CD4-positive, alpha-beta memory T cell (primary cell): ENCODE measurements at regions of chr2 and their contacts with region 1.

Region 1: GRCh38 chr2:37414470-37414949 is 70.1 kb downstream of the QPCT start:
- DNase-seq: peak in 4 of 5 donors; percentile 53 to 57 (median 57)
- H3K4me3 ChIP-seq: no peak overlapping the region
- H3K4me3 Mint-ChIP-seq: peak overlapping the region in 1 of 8 donors; percentile 27
- H3K27ac ChIP-seq: no peak overlapping the region
- H3K27ac Mint-ChIP-seq: no peak overlapping the region
- H3K4me1 ChIP-seq: peaks cover 7% of the 10 kb centered on the region
- H3K4me1 Mint-ChIP-seq: peaks cover 6 to 19% (median 13%) of the 10 kb centered on the region in 4 donors
- H3K27me3 ChIP-seq: no peaks in the 10 kb centered on the region
- H3K27me3 Mint-ChIP-seq: peaks cover 2 to 4% of the 10 kb centered on the region in 2 donors

Region 2: DNA sequence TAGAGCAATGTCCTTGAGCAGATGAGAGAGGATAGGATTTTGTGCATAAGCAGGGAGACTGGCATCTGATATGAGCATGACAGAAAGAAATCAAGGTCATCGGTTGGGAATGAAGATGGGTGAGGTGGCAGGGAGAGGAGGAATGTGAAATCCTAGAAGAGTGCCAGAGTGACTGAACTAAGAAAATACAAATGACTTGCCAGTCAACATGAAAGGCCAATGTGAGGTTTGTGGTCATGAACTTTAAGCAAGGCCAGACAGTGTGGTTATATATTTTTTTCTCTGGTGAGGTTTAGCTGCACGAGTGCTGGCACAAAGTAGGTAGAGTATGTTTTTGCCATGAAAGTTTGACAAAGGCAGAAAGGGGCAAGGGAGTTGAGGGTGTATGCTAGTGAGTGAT is 48.8 kb before region 1 on chr2:
- CTCF ChIA-PET with region 1: no interaction called
- POLR2A ChIA-PET with region 1: no interaction called
- intact Hi-C with region 1: no loop called
- DNase-seq: no peak
- H3K4me3 ChIP-seq: no peak overlapping the region
- H3K4me3 Mint-ChIP-seq: no peak overlapping the region
- H3K27ac ChIP-seq: no peak overlapping the region
- H3K27ac Mint-ChIP-seq: no peak overlapping the region
- H3K4me1 ChIP-seq: peaks cover 33% of the 10 kb centered on the region
- H3K4me1 Mint-ChIP-seq: peaks cover 0 to 16% (median 8%) of the 10 kb centered on the region in 4 donors
- H3K27me3 ChIP-seq: no peaks in the 10 kb centered on the region
- H3K27me3 Mint-ChIP-seq: peaks cover 11 to 19% of the 10 kb centered on the region in 2 donors

Region 3: GRCh38 chr2:37389989-37390765 is 24.3 kb before region 1 on chr2:
- CTCF ChIA-PET with region 1: interaction called, 99 read pairs
- POLR2A ChIA-PET with region 1: no interaction called
- intact Hi-C with region 1: no loop called
- DNase-seq: peak; percentile 61 to 90 (median 66)
- H3K4me3 ChIP-seq: peak overlapping the region in 1 of 2 donors; percentile 4
- H3K4me3 Mint-ChIP-seq: peak overlapping the region; percentile 28 to 78 (median 57)
- H3K27ac ChIP-seq: peak overlapping the region; percentile 38
- H3K27ac Mint-ChIP-seq: peak overlapping the region in 4 of 7 donors; percentile 62 to 94 (median 88)
- H3K4me1 ChIP-seq: peaks cover 29% of the 10 kb centered on the region
- H3K4me1 Mint-ChIP-seq: peaks cover 2 to 7% (median 3%) of the 10 kb centered on the region in 4 donors
- H3K27me3 ChIP-seq: no peaks in the 10 kb centered on the region
- H3K27me3 Mint-ChIP-seq: no peaks in the 10 kb centered on the region

Region 4: DNA sequence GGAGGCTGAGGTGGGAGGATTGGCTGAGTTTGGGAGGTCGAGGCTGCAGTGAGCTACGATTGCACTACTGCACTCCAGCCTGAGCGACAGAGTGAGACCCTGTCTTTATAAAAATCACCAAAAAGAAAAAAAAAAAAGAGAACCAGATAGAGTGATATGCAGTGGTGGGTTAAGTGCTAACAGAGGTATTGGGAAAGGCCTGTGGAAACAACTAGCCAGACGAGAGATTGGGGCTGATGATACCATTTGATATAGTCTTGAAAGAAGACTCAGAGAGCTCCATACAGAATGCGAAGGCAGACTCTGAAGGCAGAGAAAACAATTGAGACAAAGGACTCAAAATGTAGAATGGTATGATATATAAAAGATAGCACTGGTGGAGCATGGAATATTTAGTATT is 122.8 kb after region 1 on chr2:
- CTCF ChIA-PET with region 1: interaction called, 53 read pairs
- POLR2A ChIA-PET with region 1: no interaction called
- intact Hi-C with region 1: loop called (anchors 1 kb)
- DNase-seq: no peak
- H3K4me3 ChIP-seq: no peak overlapping the region
- H3K4me3 Mint-ChIP-seq: no peak overlapping the region
- H3K27ac ChIP-seq: no peak overlapping the region
- H3K27ac Mint-ChIP-seq: no peak overlapping the region
- H3K4me1 ChIP-seq: no peaks in the 10 kb centered on the region
- H3K4me1 Mint-ChIP-seq: peaks cover 0 to 5% (median under 1%) of the 10 kb centered on the region in 4 donors
- H3K27me3 ChIP-seq: no peaks in the 10 kb centered on the region
- H3K27me3 Mint-ChIP-seq: peaks cover 0 to 1% of the 10 kb centered on the region in 2 donors

Region 5: DNA sequence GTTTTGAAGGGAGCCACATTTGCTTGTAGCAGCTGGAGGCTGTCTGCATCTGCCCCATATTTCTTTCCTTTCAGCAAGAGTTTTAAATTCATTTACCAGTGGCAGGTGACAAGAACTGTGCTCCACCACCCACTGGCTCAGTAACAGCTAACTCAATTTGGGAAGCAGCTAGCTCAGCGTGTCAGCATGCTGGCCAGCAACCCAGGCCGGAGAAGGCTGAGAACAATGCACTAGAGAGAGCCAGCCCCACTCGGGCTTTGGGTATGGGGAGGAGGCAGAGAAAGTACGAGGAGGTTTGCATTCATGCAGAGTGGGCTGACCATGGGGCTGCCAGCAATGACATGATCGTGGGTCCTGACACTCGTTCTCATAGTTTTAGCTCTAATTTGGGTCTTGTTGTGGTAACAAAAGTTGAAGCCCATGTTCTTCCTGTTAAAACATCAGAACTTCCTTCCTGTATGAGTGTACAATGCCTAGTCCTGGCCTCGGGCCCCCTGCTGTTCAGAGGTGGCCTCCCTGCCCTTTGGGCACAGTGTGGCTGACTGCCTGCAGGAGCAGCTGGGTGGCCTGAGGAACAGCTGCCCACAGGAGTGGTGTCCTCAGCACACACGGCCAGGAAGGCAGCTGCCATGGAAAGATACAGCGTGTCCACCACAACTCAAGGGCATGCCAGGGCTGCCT is 234.0 kb after region 1 on chr2:
- CTCF ChIA-PET with region 1: interaction called, 26 read pairs
- POLR2A ChIA-PET with region 1: interaction called, 4 read pairs
- intact Hi-C with region 1: loop called (anchors 1 kb)
- DNase-seq: peak; percentile 42 to 76 (median 50)
- H3K4me3 ChIP-seq: peak overlapping the region in 1 of 2 donors; percentile 50
- H3K4me3 Mint-ChIP-seq: peak overlapping the region in 7 of 8 donors; percentile 66 to 91 (median 80)
- H3K27ac ChIP-seq: peak overlapping the region; percentile 56
- H3K27ac Mint-ChIP-seq: peak overlapping the region; percentile 85 to 98 (median 92)
- H3K4me1 ChIP-seq: peaks cover 97% of the 10 kb centered on the region
- H3K4me1 Mint-ChIP-seq: peaks cover 76 to 96% (median 88%) of the 10 kb centered on the region in 4 donors
- H3K27me3 ChIP-seq: no peaks in the 10 kb centered on the region
- H3K27me3 Mint-ChIP-seq: no peaks in the 10 kb centered on the region

Region 6: DNA sequence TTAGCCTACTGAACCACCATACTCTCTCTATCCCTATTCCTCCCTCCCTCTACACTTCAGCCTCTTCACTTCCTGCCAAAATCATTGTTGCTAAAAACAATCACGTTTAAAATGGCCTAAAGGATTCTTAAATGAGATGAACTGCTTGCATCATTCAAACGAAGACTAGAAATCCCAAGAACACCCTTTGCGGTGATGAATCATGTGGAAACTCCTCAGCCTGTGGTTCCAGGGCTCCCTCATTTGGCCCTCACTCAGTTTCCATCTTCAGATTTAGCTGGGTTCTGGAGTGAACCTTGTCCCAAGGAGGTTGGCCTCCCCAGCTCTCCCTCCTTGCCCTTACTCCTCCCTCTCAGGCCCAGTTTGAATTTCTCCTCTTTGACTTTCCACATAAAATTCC is 382.6 kb after region 1 on chr2:
- CTCF ChIA-PET with region 1: interaction called, 4 read pairs
- POLR2A ChIA-PET with region 1: no interaction called
- intact Hi-C with region 1: loop called (anchors 1 kb)
- DNase-seq: no peak
- H3K4me3 ChIP-seq: no peak overlapping the region
- H3K4me3 Mint-ChIP-seq: no peak overlapping the region
- H3K27ac ChIP-seq: no peak overlapping the region
- H3K27ac Mint-ChIP-seq: peak overlapping the region in 1 of 7 donors; percentile 13
- H3K4me1 ChIP-seq: no peaks in the 10 kb centered on the region
- H3K4me1 Mint-ChIP-seq: peaks cover 0 to 2% (median 0%) of the 10 kb centered on the region in 4 donors
- H3K27me3 ChIP-seq: no peaks in the 10 kb centered on the region
- H3K27me3 Mint-ChIP-seq: no peaks in the 10 kb centered on the region

Region 7: GRCh38 chr2:37877457-37878315 is 463.2 kb after region 1 on chr2:
- CTCF ChIA-PET with region 1: interaction called, 162 read pairs
- POLR2A ChIA-PET with region 1: interaction called, 4 read pairs
- intact Hi-C with region 1: loop called (anchors 1 kb)
- DNase-seq: peak in 4 of 5 donors; percentile 45 to 57 (median 52)
- H3K4me3 ChIP-seq: no peak overlapping the region
- H3K4me3 Mint-ChIP-seq: no peak overlapping the region
- H3K27ac ChIP-seq: no peak overlapping the region
- H3K27ac Mint-ChIP-seq: no peak overlapping the region
- H3K4me1 ChIP-seq: no peaks in the 10 kb centered on the region
- H3K4me1 Mint-ChIP-seq: no peaks in the 10 kb centered on the region
- H3K27me3 ChIP-seq: no peaks in the 10 kb centered on the region
- H3K27me3 Mint-ChIP-seq: peaks cover 2 to 7% of the 10 kb centered on the region in 2 donors